ENCODE measurements at regions of chr2 and their contacts with region 1.

Region 1: GRCh38 chr2:69565431-69565839 is 78.1 kb downstream of the AAK1 start:
- DNase-seq: peak; percentile 43 to 83 (median 73)
- ATAC-seq: peak; percentile 79
- H3K4me3 ChIP-seq: no peak overlapping the region
- H3K4me3 Mint-ChIP-seq: peak overlapping the region; percentile 63
- H3K27ac ChIP-seq: no peak overlapping the region
- H3K27ac Mint-ChIP-seq: peak overlapping the region; percentile 72
- H3K4me1 ChIP-seq: peaks cover 91% of the 10 kb centered on the region
- H3K4me1 Mint-ChIP-seq: peaks cover 92% of the 10 kb centered on the region
- H3K27me3 ChIP-seq: no peaks in the 10 kb centered on the region
- H3K27me3 Mint-ChIP-seq: no peaks in the 10 kb centered on the region
- CTCF ChIP-seq: peak; percentile 80

Region 2: GRCh38 chr2:69395866-69396265 is 169.6 kb before region 1 on chr2:
- CTCF ChIA-PET with region 1: no interaction called
- POLR2A ChIA-PET with region 1: no interaction called
- intact Hi-C with region 1: no loop called
- DNase-seq: no peak
- ATAC-seq: no peak
- H3K4me3 ChIP-seq: no peak overlapping the region
- H3K4me3 Mint-ChIP-seq: no peak overlapping the region
- H3K27ac ChIP-seq: no peak overlapping the region
- H3K27ac Mint-ChIP-seq: no peak overlapping the region
- H3K4me1 ChIP-seq: no peaks in the 10 kb centered on the region
- H3K4me1 Mint-ChIP-seq: no peaks in the 10 kb centered on the region
- H3K27me3 ChIP-seq: no peaks in the 10 kb centered on the region
- H3K27me3 Mint-ChIP-seq: no peaks in the 10 kb centered on the region
- CTCF ChIP-seq: no peak

Region 3: GRCh38 chr2:69549421-69549820 is 16.0 kb before region 1 on chr2:
- CTCF ChIA-PET with region 1: interaction called, 26 read pairs
- POLR2A ChIA-PET with region 1: interaction called, 4 read pairs
- intact Hi-C with region 1: no loop called
- DNase-seq: no peak
- ATAC-seq: no peak
- H3K4me3 ChIP-seq: no peak overlapping the region
- H3K4me3 Mint-ChIP-seq: no peak overlapping the region
- H3K27ac ChIP-seq: no peak overlapping the region
- H3K27ac Mint-ChIP-seq: peak overlapping the region; percentile 29
- H3K4me1 ChIP-seq: peaks cover 18% of the 10 kb centered on the region
- H3K4me1 Mint-ChIP-seq: peaks cover 69% of the 10 kb centered on the region
- H3K27me3 ChIP-seq: no peaks in the 10 kb centered on the region
- H3K27me3 Mint-ChIP-seq: no peaks in the 10 kb centered on the region
- CTCF ChIP-seq: no peak

Region 4: DNA sequence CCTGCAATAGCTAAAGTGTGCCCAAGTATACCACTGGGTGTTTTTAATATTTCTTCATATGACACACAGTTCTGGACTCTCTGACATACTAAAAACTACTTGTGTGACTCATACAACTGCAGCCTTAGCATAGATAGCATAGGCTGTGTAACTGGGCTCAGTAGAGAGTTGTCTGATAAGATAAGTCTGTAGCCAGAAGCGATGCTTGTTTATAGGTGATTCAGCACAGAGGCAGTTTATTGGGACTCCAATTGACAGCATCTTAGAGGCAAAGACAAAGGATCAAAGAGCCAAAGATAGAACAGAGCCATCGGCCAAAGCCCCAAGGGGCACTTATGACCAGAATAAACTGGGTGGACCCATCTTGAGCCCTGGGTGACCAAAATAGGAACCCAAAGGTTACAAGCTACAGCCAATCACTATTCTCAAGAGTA is 35.8 kb after region 1 on chr2:
- CTCF ChIA-PET with region 1: interaction called, 15 read pairs
- POLR2A ChIA-PET with region 1: interaction called, 3 read pairs
- intact Hi-C with region 1: no loop called
- DNase-seq: no peak
- ATAC-seq: peak; percentile 61
- H3K4me3 ChIP-seq: no peak overlapping the region
- H3K4me3 Mint-ChIP-seq: no peak overlapping the region
- H3K27ac ChIP-seq: no peak overlapping the region
- H3K27ac Mint-ChIP-seq: peak overlapping the region; percentile 55
- H3K4me1 ChIP-seq: peaks cover 85% of the 10 kb centered on the region
- H3K4me1 Mint-ChIP-seq: peaks cover 90% of the 10 kb centered on the region
- H3K27me3 ChIP-seq: no peaks in the 10 kb centered on the region
- H3K27me3 Mint-ChIP-seq: no peaks in the 10 kb centered on the region
- CTCF ChIP-seq: no peak

Region 5: DNA sequence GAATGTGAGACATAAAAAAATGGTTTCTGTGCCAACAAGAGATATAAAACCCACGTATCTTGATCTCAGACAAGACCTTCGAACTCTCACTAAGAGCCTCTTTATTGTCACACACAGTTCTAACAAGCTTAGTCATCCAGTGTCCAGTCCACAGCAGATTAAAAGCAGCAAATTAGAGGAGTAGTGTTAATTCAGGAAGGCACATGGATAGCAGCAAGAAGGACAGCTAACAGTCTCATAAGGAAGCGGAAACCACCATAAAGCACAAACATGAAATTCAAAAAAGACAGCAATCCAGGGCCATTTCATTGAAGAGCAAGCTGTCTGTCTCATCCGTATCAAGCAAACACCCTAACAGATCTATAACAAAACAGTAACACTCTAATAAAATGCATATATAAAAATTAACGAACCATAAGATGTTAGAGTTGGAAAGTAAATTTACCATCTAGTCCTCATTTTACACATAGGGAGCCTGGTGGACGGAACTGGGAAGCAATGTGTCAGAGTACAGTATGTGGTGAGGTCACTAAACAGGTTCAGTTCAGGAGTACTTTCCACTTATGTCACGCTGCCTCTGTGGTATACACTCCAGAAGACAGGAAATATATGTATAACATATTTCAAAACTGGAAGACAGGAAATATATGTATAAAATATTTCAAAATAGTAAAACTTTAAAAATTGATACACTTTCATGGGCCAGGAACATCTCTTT is 59.8 kb after region 1 on chr2:
- CTCF ChIA-PET with region 1: interaction called, 23 read pairs
- POLR2A ChIA-PET with region 1: interaction called, 4 read pairs
- intact Hi-C with region 1: no loop called
- DNase-seq: peak in 1 of 9 experiments; percentile 40
- ATAC-seq: peak; percentile 19
- H3K4me3 ChIP-seq: no peak overlapping the region
- H3K4me3 Mint-ChIP-seq: no peak overlapping the region
- H3K27ac ChIP-seq: peak overlapping the region in 1 of 2 experiments; percentile 7
- H3K27ac Mint-ChIP-seq: no peak overlapping the region
- H3K4me1 ChIP-seq: peaks cover 81% of the 10 kb centered on the region
- H3K4me1 Mint-ChIP-seq: peaks cover 17% of the 10 kb centered on the region
- H3K27me3 ChIP-seq: no peaks in the 10 kb centered on the region
- H3K27me3 Mint-ChIP-seq: no peaks in the 10 kb centered on the region
- CTCF ChIP-seq: no peak

Region 6: DNA sequence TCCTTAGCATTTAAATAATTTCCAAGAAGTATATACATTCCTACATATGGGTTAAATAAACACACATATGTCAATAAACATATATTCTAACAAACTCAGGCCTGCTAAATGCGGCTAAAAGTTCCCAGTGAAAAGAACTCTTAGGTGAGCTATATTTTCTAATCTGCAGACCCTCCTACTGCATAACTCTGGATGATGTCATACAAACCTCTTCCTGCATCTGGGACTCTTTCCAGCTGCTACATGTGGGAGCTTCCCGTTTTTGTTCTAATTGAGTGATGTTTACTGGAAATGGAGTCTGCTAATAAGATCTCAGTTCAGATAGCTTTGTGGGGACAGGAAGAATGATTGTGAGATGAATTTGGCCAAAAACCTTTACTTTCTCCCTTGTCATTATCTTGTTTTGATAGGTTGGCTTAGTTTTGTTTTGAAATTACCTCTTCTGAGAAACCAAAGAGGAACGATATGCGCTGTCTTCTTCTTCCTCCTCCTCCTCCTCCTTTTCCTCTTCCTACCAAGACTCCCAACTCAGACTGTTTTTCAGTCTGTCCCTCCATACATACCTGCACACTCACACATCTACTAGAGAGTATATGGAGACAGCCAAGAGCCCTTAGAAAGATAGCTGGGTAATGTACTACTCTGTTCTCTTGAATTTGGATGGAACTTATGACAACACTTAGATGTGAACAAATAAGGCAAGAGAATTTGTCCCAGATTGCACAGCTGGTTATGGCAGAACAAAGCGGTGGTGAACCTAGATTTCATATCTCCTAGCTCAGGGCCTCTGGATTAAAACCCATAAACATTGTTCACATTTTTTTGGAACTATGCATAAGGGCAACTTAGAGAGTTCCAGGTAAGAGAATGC is 117.9 kb after region 1 on chr2:
- CTCF ChIA-PET with region 1: interaction called, 10 read pairs
- POLR2A ChIA-PET with region 1: no interaction called
- intact Hi-C with region 1: no loop called
- DNase-seq: peak in 1 of 9 experiments; percentile 20
- ATAC-seq: no peak
- H3K4me3 ChIP-seq: no peak overlapping the region
- H3K4me3 Mint-ChIP-seq: peak overlapping the region; percentile 32
- H3K27ac ChIP-seq: no peak overlapping the region
- H3K27ac Mint-ChIP-seq: peak overlapping the region; percentile 86
- H3K4me1 ChIP-seq: peaks cover 26% of the 10 kb centered on the region
- H3K4me1 Mint-ChIP-seq: peaks cover 58% of the 10 kb centered on the region
- H3K27me3 ChIP-seq: no peaks in the 10 kb centered on the region
- H3K27me3 Mint-ChIP-seq: no peaks in the 10 kb centered on the region
- CTCF ChIP-seq: no peak

Region 7: DNA sequence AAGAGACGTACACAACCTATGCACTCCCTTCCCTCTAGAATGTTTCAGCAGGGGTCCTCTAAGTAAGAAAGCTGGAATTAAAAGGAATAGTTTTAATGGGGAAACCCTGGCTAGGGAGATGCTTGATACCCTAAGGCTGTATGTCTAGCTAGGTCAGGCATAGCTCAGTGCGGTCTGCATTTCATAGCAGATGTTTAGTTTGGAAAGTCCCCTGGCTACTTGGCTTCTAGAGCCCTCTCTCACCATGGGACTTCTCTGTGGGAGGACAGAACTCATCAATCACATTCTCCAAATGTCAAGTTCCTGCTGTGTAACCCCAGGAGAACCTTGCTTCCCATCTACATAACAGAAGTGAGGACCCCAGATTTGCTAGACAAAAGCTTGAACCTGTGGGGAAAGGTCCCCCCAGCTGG is 152.4 kb after region 1 on chr2:
- CTCF ChIA-PET with region 1: interaction called, 72 read pairs
- POLR2A ChIA-PET with region 1: interaction called, 3 read pairs
- intact Hi-C with region 1: no loop called
- DNase-seq: no peak
- ATAC-seq: no peak
- H3K4me3 ChIP-seq: no peak overlapping the region
- H3K4me3 Mint-ChIP-seq: no peak overlapping the region
- H3K27ac ChIP-seq: no peak overlapping the region
- H3K27ac Mint-ChIP-seq: no peak overlapping the region
- H3K4me1 ChIP-seq: peaks cover 11% of the 10 kb centered on the region
- H3K4me1 Mint-ChIP-seq: peaks cover 18% of the 10 kb centered on the region
- H3K27me3 ChIP-seq: no peaks in the 10 kb centered on the region
- H3K27me3 Mint-ChIP-seq: no peaks in the 10 kb centered on the region
- CTCF ChIP-seq: no peak

Region 8: GRCh38 chr2:70035344-70035908 is 470.0 kb after region 1 on chr2:
- CTCF ChIA-PET with region 1: no interaction called
- POLR2A ChIA-PET with region 1: no interaction called
- intact Hi-C with region 1: no loop called
- DNase-seq: no peak
- ATAC-seq: no peak
- H3K4me3 ChIP-seq: no peak overlapping the region
- H3K4me3 Mint-ChIP-seq: no peak overlapping the region
- H3K27ac ChIP-seq: no peak overlapping the region
- H3K27ac Mint-ChIP-seq: no peak overlapping the region
- H3K4me1 ChIP-seq: no peaks in the 10 kb centered on the region
- H3K4me1 Mint-ChIP-seq: peaks cover 8% of the 10 kb centered on the region
- H3K27me3 ChIP-seq: no peaks in the 10 kb centered on the region
- H3K27me3 Mint-ChIP-seq: no peaks in the 10 kb centered on the region
- CTCF ChIP-seq: no peak

Region 9: DNA sequence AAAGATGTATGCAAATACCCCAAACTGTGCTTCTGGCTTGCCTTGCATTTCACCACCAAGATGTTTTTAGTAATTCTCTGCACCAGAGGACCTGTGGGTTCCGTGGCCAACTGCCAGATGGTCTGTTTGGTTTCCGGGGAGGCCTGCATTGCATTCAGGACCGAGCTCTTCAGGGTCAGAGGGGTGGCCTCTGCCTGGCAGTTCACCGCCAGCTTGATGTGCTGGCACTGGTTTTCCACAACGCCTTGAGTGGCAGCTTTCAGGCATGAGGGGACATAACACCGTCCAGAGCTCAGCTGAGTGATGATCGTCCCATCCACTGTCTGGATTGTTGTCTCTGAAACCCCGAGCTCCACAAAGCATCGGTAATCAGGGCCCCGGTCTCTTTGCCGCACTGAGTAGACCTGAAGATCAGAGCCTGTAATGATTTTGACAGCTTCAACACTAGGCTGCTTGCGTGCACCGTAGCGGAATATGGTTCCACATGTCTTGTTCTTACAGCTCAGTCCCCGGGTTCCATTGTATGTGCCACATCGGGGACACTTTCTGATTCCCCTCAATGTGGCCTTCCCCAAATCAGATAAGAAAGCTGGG is 616.0 kb after region 1 on chr2:
- CTCF ChIA-PET with region 1: no interaction called
- POLR2A ChIA-PET with region 1: no interaction called
- intact Hi-C with region 1: no loop called
- DNase-seq: no peak
- ATAC-seq: no peak
- H3K4me3 ChIP-seq: no peak overlapping the region
- H3K4me3 Mint-ChIP-seq: no peak overlapping the region
- H3K27ac ChIP-seq: peak overlapping the region in 1 of 2 experiments; percentile 3
- H3K27ac Mint-ChIP-seq: peak overlapping the region; percentile 46
- H3K4me1 ChIP-seq: no peaks in the 10 kb centered on the region
- H3K4me1 Mint-ChIP-seq: no peaks in the 10 kb centered on the region
- H3K27me3 ChIP-seq: no peaks in the 10 kb centered on the region
- H3K27me3 Mint-ChIP-seq: no peaks in the 10 kb centered on the region
- CTCF ChIP-seq: no peak